ENCODE measurements at regions of chr2 and their contacts with region 1.

Region 1: DNA sequence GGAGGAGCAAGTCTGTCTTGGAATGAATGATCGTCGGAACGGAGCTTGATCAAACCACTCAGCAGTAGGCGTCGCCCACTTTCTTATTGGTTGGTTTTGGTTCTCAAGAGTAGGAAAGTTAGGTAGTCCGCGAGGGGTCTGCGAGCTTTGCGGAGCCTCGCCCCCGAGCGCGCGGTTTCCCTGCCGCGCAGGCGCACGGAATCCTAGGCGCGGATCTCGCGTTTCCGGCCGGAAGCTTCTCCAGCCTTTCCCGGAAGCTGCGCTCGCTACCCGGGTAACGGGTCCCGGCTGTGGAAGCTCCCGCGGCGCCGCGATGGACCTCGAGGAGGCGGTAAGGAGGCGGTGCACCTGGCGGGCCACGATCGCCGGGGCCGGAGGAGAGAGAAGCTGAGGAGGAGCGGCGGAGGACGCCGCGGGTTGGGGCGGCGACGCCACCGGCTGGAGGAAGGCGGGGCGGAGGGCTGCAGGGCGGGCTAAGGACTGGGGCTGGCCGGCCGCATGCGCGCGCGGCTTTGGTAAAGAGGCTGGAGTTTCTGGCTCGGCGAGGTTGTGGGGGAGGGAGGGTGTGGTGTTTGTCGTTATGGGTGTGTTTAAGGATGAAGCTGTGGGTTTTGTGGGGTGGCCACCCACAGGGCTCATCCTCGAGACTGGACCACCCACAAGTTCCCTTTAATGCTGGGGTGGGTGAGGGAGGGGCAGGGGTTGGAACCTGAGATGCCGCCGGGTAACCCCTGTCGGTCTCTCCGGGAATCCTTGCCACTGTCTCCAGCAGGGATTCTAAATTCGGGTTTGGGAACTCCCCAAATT is at the start of gene TAF1B:
- DNase-seq: peak; percentile 87
- H3K4me3 Mint-ChIP-seq: peak within 1 kb of the TSS; percentile 91
- H3K27ac Mint-ChIP-seq: peak within 1 kb of the TSS; percentile 93
- H3K4me1 Mint-ChIP-seq: peaks cover 46% of the 10 kb centered on the region
- H3K27me3 Mint-ChIP-seq: no peaks in the 10 kb centered on the region
- total RNA-seq, gene TAF1B: 23.3 and 25.1 TPM in 2 replicates

Region 2: DNA sequence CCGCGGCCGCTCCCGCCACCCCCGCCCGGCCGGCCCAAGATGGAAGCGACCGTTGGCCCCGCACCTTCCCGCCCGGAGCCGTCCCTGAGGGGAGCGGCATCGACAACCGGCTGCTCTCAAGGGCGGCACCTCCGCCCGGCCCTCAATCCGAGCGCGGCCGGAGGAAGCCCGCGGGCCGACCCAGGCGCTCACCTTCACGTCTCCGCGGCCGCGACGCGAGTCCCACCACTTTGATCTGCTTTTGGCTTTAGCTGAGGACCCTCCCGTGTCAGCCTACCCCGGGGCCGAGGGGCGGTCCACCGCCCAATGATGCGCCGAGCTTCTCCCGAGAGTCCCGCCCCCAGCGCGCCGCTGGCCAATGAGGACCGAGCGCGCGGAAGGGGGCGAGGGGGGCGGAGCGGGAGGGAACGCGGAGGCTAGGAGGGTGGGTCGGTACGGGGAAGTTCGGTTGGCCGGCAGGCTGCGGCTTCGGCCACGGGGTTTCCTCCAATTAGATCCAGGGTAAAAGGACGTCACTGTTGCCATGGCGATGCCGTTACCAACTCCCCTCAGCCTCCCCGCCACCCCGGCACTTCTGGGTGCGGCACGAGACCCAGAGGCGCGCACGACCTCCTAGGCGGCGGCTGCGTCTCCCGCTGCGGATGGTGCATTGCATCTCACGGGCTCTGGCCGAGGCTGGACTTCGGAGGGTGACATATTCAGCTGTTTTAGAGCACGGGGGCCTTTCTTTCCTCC is 212.5 kb before region 1 on chr2 and contains the start of gene YWHAQ:
- intact Hi-C with region 1: loop called (anchors 2 kb)
- DNase-seq: peak; percentile 97
- H3K4me3 Mint-ChIP-seq: peak within 1 kb of the TSS; percentile 97
- H3K27ac Mint-ChIP-seq: peak within 1 kb of the TSS; percentile 93
- H3K4me1 Mint-ChIP-seq: peaks cover 45% of the 10 kb centered on the region
- H3K27me3 Mint-ChIP-seq: peaks cover 9% of the 10 kb centered on the region
- total RNA-seq, gene YWHAQ: 290 and 311 TPM in 2 replicates

Region 3: DNA sequence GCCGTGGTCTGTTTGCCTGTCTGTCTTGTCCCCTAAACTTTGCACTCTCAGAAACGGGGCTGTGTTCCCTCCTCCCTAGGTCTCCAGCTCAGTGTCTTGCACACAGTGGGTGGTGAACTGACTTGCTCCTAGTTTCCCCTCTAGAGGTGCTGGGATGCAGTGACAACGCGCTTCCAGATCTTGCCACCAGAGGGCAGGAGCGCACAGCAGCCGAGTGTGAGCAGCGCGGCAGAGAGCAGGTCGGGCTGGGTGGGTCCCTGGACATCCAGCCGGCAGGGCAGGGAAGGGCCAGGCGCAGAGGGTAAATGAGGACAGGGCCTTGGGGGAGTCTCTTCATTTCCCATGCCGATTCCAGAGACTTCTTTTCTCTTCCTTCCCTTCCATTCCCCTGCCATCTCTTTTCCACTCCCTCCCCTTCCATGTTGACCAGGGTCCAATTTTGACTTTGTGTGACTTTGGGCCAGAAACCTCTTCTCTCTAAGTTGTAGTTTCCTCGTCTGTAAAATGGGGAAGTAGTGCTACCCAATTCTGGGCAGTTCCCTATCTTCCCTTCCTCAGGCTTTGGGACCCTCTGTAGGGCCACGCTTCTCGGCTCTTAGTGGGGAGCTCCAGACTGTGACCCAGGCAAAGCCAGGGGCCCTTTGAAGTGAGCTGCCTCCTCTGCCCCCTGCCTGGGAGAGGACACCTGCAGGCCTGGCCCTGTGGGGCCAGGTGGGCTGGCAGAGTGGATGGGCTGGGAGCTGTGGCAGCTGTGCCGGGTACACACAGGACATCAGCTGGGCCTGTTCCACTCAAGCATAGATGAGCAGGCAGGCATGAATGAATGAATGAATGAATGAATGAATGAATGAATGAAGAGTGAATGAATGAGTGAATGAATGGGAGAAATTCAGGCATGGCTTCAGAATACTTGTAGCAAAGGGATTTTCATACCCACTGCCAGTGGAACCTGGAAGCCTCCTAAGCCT is 43.5 kb before region 1 on chr2:
- intact Hi-C with region 1: loop called (anchors 2 kb)
- DNase-seq: peak; percentile 81
- H3K4me3 Mint-ChIP-seq: peak overlapping the region; percentile 66
- H3K27ac Mint-ChIP-seq: peak overlapping the region; percentile 85
- H3K4me1 Mint-ChIP-seq: peaks cover 37% of the 10 kb centered on the region
- H3K27me3 Mint-ChIP-seq: peaks cover 7% of the 10 kb centered on the region

Region 4: DNA sequence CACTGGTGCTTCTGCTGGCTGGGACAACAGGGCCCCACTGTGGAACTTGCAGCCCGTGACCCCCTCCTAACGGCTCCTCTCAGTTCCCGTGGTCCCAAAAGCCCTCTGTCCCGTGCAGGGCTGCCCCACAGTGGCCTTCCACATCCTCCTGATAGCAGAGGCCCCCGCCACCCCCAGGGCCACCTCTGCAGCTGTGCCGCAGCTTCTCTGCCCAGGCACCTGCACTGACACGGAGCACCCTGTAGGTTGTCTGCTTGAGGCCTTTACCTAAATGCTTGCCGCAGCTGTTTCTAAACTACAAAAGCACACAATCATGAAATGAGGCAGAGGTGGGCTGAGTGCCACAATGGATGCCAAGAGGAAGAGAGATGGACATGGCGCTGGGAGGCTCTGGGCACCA is 94.5 kb after region 1 on chr2:
- intact Hi-C with region 1: no loop called
- DNase-seq: no peak
- H3K4me3 Mint-ChIP-seq: no peak overlapping the region
- H3K27ac Mint-ChIP-seq: no peak overlapping the region
- H3K4me1 Mint-ChIP-seq: no peaks in the 10 kb centered on the region
- H3K27me3 Mint-ChIP-seq: peaks cover 5% of the 10 kb centered on the region

Region 5: GRCh38 chr2:9951272-9951972 is 108.0 kb after region 1 on chr2 and contains the start of gene GRHL1:
- intact Hi-C with region 1: loop called (anchors 1 kb)
- DNase-seq: peak; percentile 92
- H3K4me3 Mint-ChIP-seq: peak within 1 kb of the TSS; percentile 85
- H3K27ac Mint-ChIP-seq: peak within 1 kb of the TSS; percentile 82
- H3K4me1 Mint-ChIP-seq: peaks cover 24% of the 10 kb centered on the region
- H3K27me3 Mint-ChIP-seq: peaks cover 54% of the 10 kb centered on the region
- total RNA-seq, gene GRHL1: 1.4 and 1.5 TPM in 2 replicates

Region 6: DNA sequence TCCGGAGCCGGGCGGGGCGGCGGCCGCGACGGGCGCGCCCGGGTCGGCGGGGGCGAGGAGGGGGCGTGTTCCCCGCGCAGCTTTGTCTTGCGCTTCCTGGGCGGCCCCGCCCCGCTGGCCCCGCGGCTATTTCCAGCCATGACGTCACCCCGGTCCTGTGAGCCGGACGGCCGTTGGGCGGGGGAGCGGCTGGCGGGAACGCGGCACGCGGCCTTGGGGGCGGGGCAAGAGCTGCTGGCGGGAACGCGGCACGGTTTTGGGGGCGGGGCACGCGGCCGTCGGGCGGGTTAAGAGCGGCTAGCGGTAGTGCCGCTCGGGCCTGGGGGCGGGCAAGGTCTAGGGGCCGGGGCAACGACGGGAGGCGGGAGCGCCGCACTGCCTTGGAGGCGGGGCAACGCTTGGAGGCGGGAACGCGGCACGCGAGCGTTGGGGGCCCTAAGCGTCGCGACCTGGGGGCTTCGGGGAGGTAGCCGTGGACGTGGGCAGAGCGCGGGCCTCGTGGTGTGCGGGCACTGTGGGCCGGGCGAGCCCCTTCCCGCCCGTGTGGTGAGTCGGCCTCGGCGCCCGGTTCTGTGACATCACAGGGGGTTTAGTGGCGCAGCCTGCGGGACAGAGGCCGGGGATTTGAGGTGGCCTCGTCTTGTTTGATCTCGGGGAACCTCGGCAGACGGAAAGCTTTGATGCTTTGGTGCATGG is 200.6 kb after region 1 on chr2:
- intact Hi-C with region 1: loop called (anchors 1 kb)
- DNase-seq: peak; percentile 86
- H3K4me3 Mint-ChIP-seq: peak overlapping the region; percentile 77
- H3K27ac Mint-ChIP-seq: peak overlapping the region; percentile 66
- H3K4me1 Mint-ChIP-seq: peaks cover 14% of the 10 kb centered on the region
- H3K27me3 Mint-ChIP-seq: peaks cover 22% of the 10 kb centered on the region

Measured in activated T-helper 1 cell treated with anti-CD3 and anti-CD28 coated beads, Interleukin-12 subunit alpha, Interleukin-12 subunit beta, Interleukin-2, Interleukin-4 antibody, amounts not matched to agents 30 ng/mL and 10 ng/mL and 1 ng/mL, durations not matched to agents 14 hours and 24 hours and 36 hours (primary cell).